HEK293 (cell line): ENCODE measurements at regions of chr2 and their contacts with region 1.

Region 1: GRCh38 chr2:226752887-226753286 is 46.7 kb downstream of the IRS1 start:
- H3K4me3 ChIP-seq: no peak overlapping the region
- H3K27ac ChIP-seq: no peak overlapping the region
- H3K4me1 ChIP-seq: peaks cover 26% of the 10 kb centered on the region
- CTCF ChIP-seq: no peak

Region 2: GRCh38 chr2:226742347-226742746 is 10.5 kb before region 1 on chr2:
- CTCF ChIA-PET with region 1: interaction called, 15 read pairs
- POLR2A ChIA-PET with region 1: interaction called, 3 read pairs
- H3K4me3 ChIP-seq: no peak overlapping the region
- H3K27ac ChIP-seq: no peak overlapping the region
- H3K4me1 ChIP-seq: peaks cover 9% of the 10 kb centered on the region
- CTCF ChIP-seq: no peak